ENCODE measurements at regions of chr2 and their contacts with region 1.

Region 1: GRCh38 chr2:46010925-46011490 is 286.2 kb upstream of the EPAS1 start:
- DNase-seq: no peak
- H3K4me3 ChIP-seq: no peak overlapping the region
- H3K27ac ChIP-seq: no peak overlapping the region
- H3K4me1 ChIP-seq: peaks cover 0 to 14% of the 10 kb centered on the region in 2 donors
- H3K27me3 ChIP-seq: no peaks in the 10 kb centered on the region
- CTCF ChIP-seq: peak; percentile 51 to 68 (median 65)

Region 2: GRCh38 chr2:46062637-46063412 is 51.8 kb after region 1 on chr2:
- intact Hi-C with region 1: loop called (anchors 5 kb)
- DNase-seq: peak; percentile 12 to 93
- H3K4me3 ChIP-seq: no peak overlapping the region
- H3K27ac ChIP-seq: no peak overlapping the region
- H3K4me1 ChIP-seq: peaks cover 3 to 4% of the 10 kb centered on the region in 2 donors
- H3K27me3 ChIP-seq: no peaks in the 10 kb centered on the region
- CTCF ChIP-seq: peak; percentile 83 to 94 (median 88)